ENCODE measurements at regions of chr12 and their contacts with region 1.

Region 1: DNA sequence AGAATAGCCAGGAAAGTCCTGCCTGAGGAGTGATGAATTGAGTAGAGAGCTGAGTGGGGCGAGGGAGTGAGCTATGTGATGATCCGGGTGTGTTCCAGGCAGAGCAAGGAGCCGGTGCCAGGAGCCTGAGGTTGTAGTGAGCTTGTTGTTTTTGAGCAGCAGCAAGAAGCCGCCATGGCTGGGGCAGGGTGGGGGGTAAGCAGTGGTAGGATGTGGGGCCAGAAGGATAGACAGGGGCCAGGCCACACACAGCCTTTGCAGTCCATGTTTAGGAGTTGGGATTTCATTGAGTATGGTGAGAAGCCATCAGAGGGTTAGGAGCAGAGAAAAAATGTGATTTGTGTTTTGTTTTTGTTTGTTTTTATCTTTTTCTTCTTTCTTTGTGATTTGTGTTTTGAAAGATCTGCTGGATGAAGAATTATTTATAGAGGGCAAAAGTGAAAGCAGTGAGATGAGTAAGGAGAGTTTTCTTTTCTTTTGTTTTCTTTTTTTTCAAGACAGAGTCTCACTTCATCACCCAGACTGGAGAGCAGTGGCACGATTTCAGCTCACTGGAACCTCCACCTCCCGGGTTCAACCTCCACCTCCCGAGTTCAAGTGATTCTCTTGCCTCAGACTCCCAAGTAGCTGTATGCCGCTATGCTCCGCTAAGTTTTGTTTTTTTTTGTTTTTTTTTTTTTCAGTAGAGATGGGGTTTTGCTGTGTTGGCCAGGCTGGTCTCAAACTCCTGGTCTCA is 92.3 kb upstream of the BCAT1 start:
- DNase-seq: no peak
- ATAC-seq: no peak
- H3K4me3 Mint-ChIP-seq: no peak overlapping the region
- H3K27ac Mint-ChIP-seq: peak overlapping the region in 2 of 10 donors; percentile 22 to 45
- H3K4me1 Mint-ChIP-seq: peaks cover 0 to 14% (median 4%) of the 10 kb centered on the region in 4 donors
- H3K27me3 Mint-ChIP-seq: peaks cover 0 to 4% (median 3%) of the 10 kb centered on the region in 5 donors

Region 2: DNA sequence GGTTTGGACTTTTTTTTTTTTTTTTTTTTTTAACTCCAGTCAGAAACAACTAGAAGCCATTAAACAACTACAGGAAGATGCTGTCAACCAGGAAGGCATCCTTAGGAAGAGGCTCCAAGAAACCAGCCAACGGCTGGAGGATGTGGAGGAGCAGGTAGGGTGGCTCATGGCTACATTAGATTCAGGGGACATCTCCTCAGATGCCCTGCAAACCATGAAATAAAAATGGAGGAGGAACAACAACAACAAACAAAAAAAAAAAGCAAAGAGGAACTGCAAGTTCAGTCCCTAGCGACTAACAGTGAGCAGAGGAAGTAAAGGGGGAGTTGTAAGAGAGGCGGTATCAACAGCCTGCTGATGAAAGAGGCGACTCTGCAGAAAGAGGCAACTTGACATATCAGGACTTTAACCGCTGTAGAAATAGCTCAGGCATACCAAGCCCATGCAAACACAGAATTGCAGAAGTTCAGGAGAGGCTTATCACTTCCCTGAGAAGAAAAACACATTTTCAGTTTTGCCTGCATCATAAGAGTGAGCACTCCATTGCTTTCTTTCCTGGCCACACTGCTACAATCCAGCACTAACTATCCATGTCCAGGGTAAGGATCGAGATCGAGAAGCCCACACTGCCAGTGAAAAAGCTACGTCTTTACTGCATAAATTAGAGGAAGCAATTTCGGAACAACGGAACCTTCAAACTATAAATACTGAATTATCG is 11.2 kb after region 1 on chr12:
- POLR2A ChIA-PET with region 1: interaction called, 13 read pairs
- DNase-seq: peak in 9 of 10 donors; percentile 15 to 95 (median 71)
- ATAC-seq: peak; percentile 78 to 82
- H3K4me3 Mint-ChIP-seq: peak overlapping the region; percentile 82 to 98 (median 96)
- H3K27ac Mint-ChIP-seq: peak overlapping the region; percentile 94 to 99 (median 99)
- H3K4me1 Mint-ChIP-seq: peaks cover 25 to 55% (median 41%) of the 10 kb centered on the region in 4 donors
- H3K27me3 Mint-ChIP-seq: no peaks in the 10 kb centered on the region